ENCODE measurements at regions of chr19 and their contacts with region 1.

Region 1: DNA sequence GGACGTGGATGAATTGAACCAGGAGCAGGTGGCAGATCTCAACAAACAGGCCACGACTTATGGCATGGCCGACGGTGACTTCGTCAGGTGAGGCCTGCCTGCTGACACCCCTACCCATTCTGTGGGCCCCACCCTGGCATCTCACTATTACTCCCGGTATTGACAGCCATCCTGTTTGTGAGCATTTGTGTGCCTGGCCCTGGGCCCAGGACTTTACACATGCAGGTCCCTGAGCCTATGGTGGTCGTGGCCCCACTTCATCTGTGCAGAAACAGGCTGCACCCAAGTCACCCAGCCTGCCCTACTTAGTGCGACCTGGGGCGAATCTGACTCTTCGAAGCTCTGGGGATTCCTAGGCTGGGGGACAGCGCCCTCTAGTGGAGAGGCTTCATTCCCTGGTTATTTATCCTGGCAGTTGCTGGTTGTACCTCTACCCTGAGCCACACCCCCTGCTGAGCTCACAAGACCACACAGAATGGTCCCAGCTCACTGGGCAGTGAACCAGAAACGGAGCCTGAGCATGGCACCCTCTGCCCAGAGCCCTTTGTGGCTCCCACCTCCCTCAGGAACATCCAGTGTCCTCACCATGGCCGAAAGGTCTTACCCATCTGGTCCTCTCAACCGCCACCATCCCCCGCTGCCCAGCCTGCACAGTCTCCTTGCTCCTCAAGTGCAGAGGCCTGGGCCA is 16.9 kb downstream of the ZNF296 start:
- DNase-seq: peak; percentile 71 to 91 (median 84)
- ATAC-seq: peak; percentile 93
- H3K4me3 ChIP-seq: no peak overlapping the region
- H3K4me3 Mint-ChIP-seq: no peak overlapping the region
- H3K27ac ChIP-seq: no peak overlapping the region
- H3K27ac Mint-ChIP-seq: no peak overlapping the region
- H3K4me1 ChIP-seq: peaks cover 3% of the 10 kb centered on the region
- H3K4me1 Mint-ChIP-seq: peaks cover 4% of the 10 kb centered on the region
- H3K27me3 ChIP-seq: no peaks in the 10 kb centered on the region
- H3K27me3 Mint-ChIP-seq: no peaks in the 10 kb centered on the region
- CTCF ChIP-seq: peak; percentile 87

Region 2: GRCh38 chr19:44689056-44689895 is 370.1 kb before region 1 on chr19:
- CTCF ChIA-PET with region 1: no interaction called
- POLR2A ChIA-PET with region 1: no interaction called
- intact Hi-C with region 1: no loop called
- DNase-seq: peak; percentile 67 to 90 (median 76)
- ATAC-seq: peak; percentile 54
- H3K4me3 ChIP-seq: no peak overlapping the region
- H3K4me3 Mint-ChIP-seq: no peak overlapping the region
- H3K27ac ChIP-seq: no peak overlapping the region
- H3K27ac Mint-ChIP-seq: no peak overlapping the region
- H3K4me1 ChIP-seq: peaks cover 32% of the 10 kb centered on the region
- H3K4me1 Mint-ChIP-seq: peaks cover 35% of the 10 kb centered on the region
- H3K27me3 ChIP-seq: no peaks in the 10 kb centered on the region
- H3K27me3 Mint-ChIP-seq: peaks cover 23% of the 10 kb centered on the region
- CTCF ChIP-seq: peak; percentile 87

Region 3: GRCh38 chr19:44903602-44904425 is 155.6 kb before region 1 on chr19:
- CTCF ChIA-PET with region 1: interaction called, 13 read pairs
- POLR2A ChIA-PET with region 1: no interaction called
- intact Hi-C with region 1: loop called (anchors 1 to 2 kb)
- DNase-seq: peak; percentile 39 to 82 (median 69)
- ATAC-seq: peak; percentile 75
- H3K4me3 ChIP-seq: no peak overlapping the region
- H3K4me3 Mint-ChIP-seq: no peak overlapping the region
- H3K27ac ChIP-seq: no peak overlapping the region
- H3K27ac Mint-ChIP-seq: no peak overlapping the region
- H3K4me1 ChIP-seq: peaks cover 17% of the 10 kb centered on the region
- H3K4me1 Mint-ChIP-seq: peaks cover 7% of the 10 kb centered on the region
- H3K27me3 ChIP-seq: peaks cover 18 to 31% of the 10 kb centered on the region in 2 experiments
- H3K27me3 Mint-ChIP-seq: peaks cover 30% of the 10 kb centered on the region
- CTCF ChIP-seq: peak; percentile 97

Region 4: DNA sequence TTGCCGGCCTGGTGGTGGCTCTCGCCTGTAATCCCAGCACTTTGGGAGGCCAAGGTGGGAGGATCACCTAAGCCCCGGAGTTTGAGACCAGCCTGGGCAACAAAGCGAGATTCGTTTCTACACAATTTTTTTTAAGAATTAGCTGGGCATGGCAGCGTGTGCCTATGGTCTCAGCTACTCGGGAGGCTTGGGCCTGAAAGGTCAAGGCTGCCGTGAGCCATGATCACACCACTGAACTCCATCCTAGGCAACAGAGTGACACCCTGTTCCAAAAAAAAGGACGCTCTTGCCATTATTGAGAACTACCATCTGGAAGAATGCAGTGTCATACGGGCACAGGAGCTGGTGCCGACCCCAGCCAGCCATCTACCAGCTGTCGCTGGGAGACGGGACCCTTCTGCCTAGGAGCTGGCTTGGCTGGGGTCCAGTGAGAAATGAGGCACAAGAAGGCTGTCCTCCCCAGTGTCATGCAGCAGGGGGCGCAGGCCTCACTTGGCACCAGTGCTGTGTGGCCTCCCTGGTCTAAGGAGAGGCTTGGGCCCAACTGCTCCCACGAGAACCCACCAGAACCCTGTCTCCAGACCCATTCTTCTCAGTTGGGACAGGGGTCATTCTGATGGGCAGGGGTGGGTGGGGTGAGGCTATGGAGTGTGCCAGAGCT is 70.4 kb before region 1 on chr19:
- CTCF ChIA-PET with region 1: interaction called, 34 read pairs
- POLR2A ChIA-PET with region 1: no interaction called
- intact Hi-C with region 1: loop called in 1 of 2 experiments (anchors 1 kb)
- DNase-seq: peak; percentile 46 to 83 (median 63)
- ATAC-seq: peak; percentile 90
- H3K4me3 ChIP-seq: no peak overlapping the region
- H3K4me3 Mint-ChIP-seq: no peak overlapping the region
- H3K27ac ChIP-seq: no peak overlapping the region
- H3K27ac Mint-ChIP-seq: no peak overlapping the region
- H3K4me1 ChIP-seq: no peaks in the 10 kb centered on the region
- H3K4me1 Mint-ChIP-seq: no peaks in the 10 kb centered on the region
- H3K27me3 ChIP-seq: no peaks in the 10 kb centered on the region
- H3K27me3 Mint-ChIP-seq: no peaks in the 10 kb centered on the region
- CTCF ChIP-seq: peak; percentile 48

Region 5: DNA sequence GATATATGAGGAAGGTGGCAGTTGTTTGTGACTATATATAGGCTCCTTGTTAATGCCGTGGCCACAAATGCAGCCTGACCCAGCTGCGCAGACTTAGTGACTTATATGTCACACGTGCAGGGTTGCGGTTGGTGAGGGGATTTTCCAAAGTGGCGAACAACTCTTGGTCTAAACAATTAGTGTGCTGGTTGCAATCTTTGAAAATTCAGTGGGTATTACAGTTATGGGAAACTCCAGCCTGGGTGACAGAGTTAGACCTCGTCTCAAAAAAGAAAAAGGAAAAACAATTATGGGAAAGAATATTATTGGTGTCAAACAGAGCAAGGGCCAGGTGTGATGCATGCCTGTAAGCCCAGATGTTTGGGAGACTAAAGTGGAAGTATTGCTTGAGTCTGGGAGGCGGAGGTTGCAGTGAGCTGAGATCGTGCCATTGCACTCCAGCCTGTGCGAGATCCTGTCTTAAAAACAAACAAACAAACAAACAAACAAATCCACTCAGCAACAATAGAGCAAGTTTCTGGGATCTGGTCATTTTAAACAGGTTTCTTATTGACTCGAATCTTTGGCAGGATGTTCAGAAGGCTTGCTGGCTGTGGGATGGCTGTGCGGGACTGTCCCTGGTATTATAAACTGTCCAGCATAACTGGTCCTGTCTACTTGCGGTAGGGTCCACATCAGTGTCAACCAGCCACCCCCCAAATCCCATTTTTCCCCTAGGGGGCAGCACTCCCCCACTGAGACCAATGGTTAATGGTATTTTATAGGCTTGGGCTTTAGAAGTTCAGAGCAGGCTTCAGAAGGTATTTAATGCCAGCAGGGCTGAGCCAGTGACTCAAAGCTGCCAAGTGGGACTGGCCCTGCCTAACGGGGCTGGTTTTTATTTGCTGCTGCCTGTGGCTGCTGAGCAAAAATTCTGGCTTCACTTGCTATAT is 42.8 kb before region 1 on chr19:
- CTCF ChIA-PET with region 1: interaction called, 8 read pairs
- POLR2A ChIA-PET with region 1: no interaction called
- intact Hi-C with region 1: loop called (anchors 2 kb)
- DNase-seq: peak; percentile 49 to 95 (median 64)
- ATAC-seq: peak; percentile 82
- H3K4me3 ChIP-seq: peak overlapping the region; percentile 13
- H3K4me3 Mint-ChIP-seq: peak overlapping the region; percentile 56
- H3K27ac ChIP-seq: peak overlapping the region; percentile 67 to 86
- H3K27ac Mint-ChIP-seq: peak overlapping the region; percentile 82
- H3K4me1 ChIP-seq: peaks cover 21% of the 10 kb centered on the region
- H3K4me1 Mint-ChIP-seq: peaks cover 13% of the 10 kb centered on the region
- H3K27me3 ChIP-seq: no peaks in the 10 kb centered on the region
- H3K27me3 Mint-ChIP-seq: no peaks in the 10 kb centered on the region
- CTCF ChIP-seq: peak; percentile 69

Region 6: GRCh38 chr19:45038931-45039893 is 20.2 kb before region 1 on chr19 and contains the start of gene CLASRP:
- CTCF ChIA-PET with region 1: interaction called, 14 read pairs
- POLR2A ChIA-PET with region 1: interaction called, 3 read pairs
- intact Hi-C with region 1: no loop called
- DNase-seq: peak; percentile 78 to 95 (median 85)
- ATAC-seq: peak; percentile 87
- H3K4me3 ChIP-seq: peak within 1 kb of the TSS; percentile 98
- H3K4me3 Mint-ChIP-seq: peak within 1 kb of the TSS; percentile 99
- H3K27ac ChIP-seq: peak within 1 kb of the TSS; percentile 91 to 99
- H3K27ac Mint-ChIP-seq: peak within 1 kb of the TSS; percentile 96
- H3K4me1 ChIP-seq: peaks cover 46% of the 10 kb centered on the region
- H3K4me1 Mint-ChIP-seq: peaks cover 34% of the 10 kb centered on the region
- H3K27me3 ChIP-seq: no peaks in the 10 kb centered on the region
- H3K27me3 Mint-ChIP-seq: no peaks in the 10 kb centered on the region
- CTCF ChIP-seq: no peak
- total RNA-seq, gene CLASRP: 152 to 154 TPM

Region 7: DNA sequence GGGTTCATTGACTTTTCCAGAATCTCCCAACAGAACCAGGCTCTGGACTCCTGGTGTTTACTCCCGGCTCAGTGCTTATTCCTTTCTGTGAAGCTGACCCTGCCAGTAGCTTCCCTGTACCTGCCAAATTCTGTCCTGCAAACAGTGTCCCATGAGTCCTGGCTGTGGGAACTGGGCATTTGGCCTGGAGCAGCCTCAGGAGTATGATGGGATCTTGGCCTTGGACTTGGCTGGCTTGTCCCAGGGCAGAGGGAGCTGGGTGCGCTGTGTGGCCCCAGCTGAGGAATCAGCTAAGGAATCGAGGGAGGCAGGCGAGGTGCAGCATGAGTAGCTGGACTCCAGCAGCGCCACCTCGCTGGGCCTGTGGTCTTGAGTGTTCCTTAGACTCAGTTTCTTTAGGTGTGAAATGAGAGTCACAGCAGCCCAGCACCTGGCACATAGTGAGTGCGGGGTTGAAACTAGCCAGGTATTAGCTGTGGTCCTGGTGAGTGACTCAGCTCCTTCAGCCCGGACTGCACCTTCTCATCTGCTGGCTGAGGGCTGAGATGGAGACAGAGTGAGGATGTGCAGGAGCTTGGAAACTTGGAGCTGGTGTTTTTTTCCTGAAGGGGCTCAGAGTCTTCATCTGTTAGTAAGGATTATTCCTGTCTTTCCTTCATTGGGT is 10.2 kb before region 1 on chr19:
- CTCF ChIA-PET with region 1: interaction called, 12 read pairs
- POLR2A ChIA-PET with region 1: no interaction called
- intact Hi-C with region 1: no loop called
- DNase-seq: no peak
- ATAC-seq: no peak
- H3K4me3 ChIP-seq: no peak overlapping the region
- H3K4me3 Mint-ChIP-seq: no peak overlapping the region
- H3K27ac ChIP-seq: no peak overlapping the region
- H3K27ac Mint-ChIP-seq: peak overlapping the region; percentile 22
- H3K4me1 ChIP-seq: peaks cover 20% of the 10 kb centered on the region
- H3K4me1 Mint-ChIP-seq: peaks cover 38% of the 10 kb centered on the region
- H3K27me3 ChIP-seq: no peaks in the 10 kb centered on the region
- H3K27me3 Mint-ChIP-seq: no peaks in the 10 kb centered on the region
- CTCF ChIP-seq: no peak